ENCODE measurements at regions of chr15 and their contacts with region 1.

Region 1: DNA sequence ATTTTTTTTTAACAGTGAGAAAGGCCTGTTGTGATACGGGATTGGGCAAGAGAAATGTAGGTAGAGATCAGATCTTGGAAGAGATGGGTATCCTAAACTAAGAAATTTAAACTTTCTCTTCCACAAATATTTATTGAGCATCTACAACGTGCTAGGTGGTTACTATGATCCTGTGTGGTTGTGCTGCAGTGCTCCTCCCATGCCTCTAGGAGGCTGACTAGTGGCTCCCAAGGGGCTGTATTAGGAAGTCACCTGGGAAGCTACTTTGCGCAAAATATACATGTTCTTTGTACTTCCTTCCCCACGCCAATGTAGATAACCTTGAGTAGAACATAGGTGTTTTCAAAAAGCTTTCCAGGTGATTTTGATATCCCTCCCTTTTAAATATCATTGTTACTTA is 27.2 kb downstream of the USP3 start:
- DNase-seq: peak in 1 of 2 experiments; percentile 30
- ATAC-seq: peak; percentile 79 to 84; a peak in 5 of 6 replicates
- H3K4me3 ChIP-seq: no peak overlapping the region
- H3K27ac ChIP-seq: no peak overlapping the region
- H3K4me1 ChIP-seq: peaks cover 40% of the 10 kb centered on the region
- CTCF ChIP-seq: no peak
- EP300 ChIP-seq: no peak
- POLR2A ChIP-seq: no peak
- RAD21 ChIP-seq: peak in 1 of 2 experiments; percentile 20; a peak in 1 of 5 replicates

Region 2: GRCh38 chr15:63514531-63514943 is 17.0 kb before region 1 on chr15:
- CTCF ChIA-PET with region 1: interaction called, 10 read pairs
- POLR2A ChIA-PET with region 1: no interaction called
- DNase-seq: peak; percentile 57 to 86
- ATAC-seq: peak; percentile 60 to 87
- H3K4me3 ChIP-seq: peak overlapping the region; percentile 30
- H3K27ac ChIP-seq: peak overlapping the region; percentile 77 to 78
- H3K4me1 ChIP-seq: peaks cover 94% of the 10 kb centered on the region
- CTCF ChIP-seq: no peak
- EP300 ChIP-seq: peak; percentile 86 to 89; a peak in 3 of 5 replicates
- POLR2A ChIP-seq: no peak
- RAD21 ChIP-seq: 0 out of 5 replicates have a peak, but pooled peaks of 1 of the 2 experiments have one; percentile 22

Region 3: GRCh38 chr15:63712828-63713520 is 181.4 kb after region 1 on chr15:
- CTCF ChIA-PET with region 1: no interaction called
- POLR2A ChIA-PET with region 1: no interaction called
- DNase-seq: no peak
- ATAC-seq: no peak
- H3K4me3 ChIP-seq: no peak overlapping the region
- H3K27ac ChIP-seq: no peak overlapping the region
- H3K4me1 ChIP-seq: peaks cover 13% of the 10 kb centered on the region
- CTCF ChIP-seq: no peak
- EP300 ChIP-seq: no peak
- POLR2A ChIP-seq: no peak
- RAD21 ChIP-seq: no peak

Region 4: GRCh38 chr15:63805993-63806980 is 274.7 kb after region 1 on chr15:
- CTCF ChIA-PET with region 1: no interaction called
- POLR2A ChIA-PET with region 1: no interaction called
- DNase-seq: no peak
- ATAC-seq: no peak
- H3K4me3 ChIP-seq: no peak overlapping the region
- H3K27ac ChIP-seq: no peak overlapping the region
- H3K4me1 ChIP-seq: no peaks in the 10 kb centered on the region
- CTCF ChIP-seq: no peak
- EP300 ChIP-seq: no peak
- POLR2A ChIP-seq: no peak
- RAD21 ChIP-seq: no peak

Region 5: DNA sequence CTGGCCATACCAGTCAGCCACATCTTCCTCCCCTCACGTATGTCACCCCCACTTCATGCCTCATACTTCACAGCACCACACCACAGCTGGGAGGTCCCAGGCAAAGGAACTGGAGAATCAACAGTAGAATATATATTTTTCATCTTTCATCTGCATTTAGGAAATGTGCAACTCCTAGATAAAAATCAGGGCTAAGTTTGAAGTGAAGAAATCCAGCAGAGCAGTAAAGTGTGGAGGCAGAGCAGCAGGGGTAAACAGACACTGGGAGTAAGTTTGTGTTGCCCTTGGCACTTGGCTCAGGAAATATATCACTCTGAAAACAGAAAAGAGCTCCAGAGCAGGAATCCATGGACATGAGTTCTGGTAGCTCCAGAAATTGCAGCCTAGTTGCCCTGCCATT is 305.0 kb after region 1 on chr15:
- CTCF ChIA-PET with region 1: no interaction called
- POLR2A ChIA-PET with region 1: no interaction called
- DNase-seq: no peak
- ATAC-seq: no peak
- H3K4me3 ChIP-seq: no peak overlapping the region
- H3K27ac ChIP-seq: no peak overlapping the region
- H3K4me1 ChIP-seq: peaks cover 14% of the 10 kb centered on the region; the same call in 1 of the 3 replicates
- CTCF ChIP-seq: no peak
- EP300 ChIP-seq: no peak
- POLR2A ChIP-seq: no peak
- RAD21 ChIP-seq: no peak

Region 6: DNA sequence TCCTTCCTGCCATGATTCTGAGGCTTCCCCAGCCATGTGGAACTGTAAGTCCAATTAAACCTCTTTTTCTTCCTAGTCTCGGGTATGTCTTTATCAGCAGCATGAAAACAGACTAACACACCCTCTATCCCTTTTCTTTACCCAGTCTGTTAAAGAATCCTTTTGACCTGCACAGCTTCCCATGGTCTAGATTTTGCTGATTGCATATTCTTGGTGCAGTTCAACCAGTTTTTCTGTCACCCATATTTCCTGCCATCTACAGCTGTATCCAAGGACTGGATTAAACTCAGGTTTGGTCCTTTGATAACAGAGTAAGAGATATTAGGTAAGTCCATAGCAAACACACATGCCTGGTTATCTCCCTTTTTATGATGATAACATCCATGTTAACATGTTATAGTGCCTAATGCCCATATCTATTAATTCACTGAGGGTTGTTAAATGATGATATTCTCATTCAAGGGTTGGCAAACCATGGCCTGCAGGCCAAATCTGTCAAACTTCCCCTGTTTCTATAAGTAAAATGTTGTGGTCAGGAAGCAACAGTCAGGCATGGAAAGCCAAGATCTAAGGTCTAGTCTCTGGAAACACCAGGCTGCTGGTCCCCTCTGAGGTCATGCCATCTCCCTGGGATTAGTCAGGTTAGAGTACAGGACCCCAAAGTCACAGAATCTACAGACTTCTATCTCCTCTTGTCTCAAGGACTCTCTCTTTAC is 317.1 kb after region 1 on chr15:
- CTCF ChIA-PET with region 1: no interaction called
- POLR2A ChIA-PET with region 1: no interaction called
- DNase-seq: no peak
- ATAC-seq: no peak
- H3K4me3 ChIP-seq: no peak overlapping the region
- H3K27ac ChIP-seq: no peak overlapping the region
- H3K4me1 ChIP-seq: no peaks in the 10 kb centered on the region
- CTCF ChIP-seq: no peak
- EP300 ChIP-seq: no peak
- POLR2A ChIP-seq: no peak
- RAD21 ChIP-seq: no peak